HEK293T (cell line): ENCODE measurements at regions of chr7 and their contacts with region 1.

Region 1: GRCh38 chr7:2241580-2242540 is at the starts of genes MRM2 and NUDT1:
- DNase-seq: peak; percentile 91

Region 2: DNA sequence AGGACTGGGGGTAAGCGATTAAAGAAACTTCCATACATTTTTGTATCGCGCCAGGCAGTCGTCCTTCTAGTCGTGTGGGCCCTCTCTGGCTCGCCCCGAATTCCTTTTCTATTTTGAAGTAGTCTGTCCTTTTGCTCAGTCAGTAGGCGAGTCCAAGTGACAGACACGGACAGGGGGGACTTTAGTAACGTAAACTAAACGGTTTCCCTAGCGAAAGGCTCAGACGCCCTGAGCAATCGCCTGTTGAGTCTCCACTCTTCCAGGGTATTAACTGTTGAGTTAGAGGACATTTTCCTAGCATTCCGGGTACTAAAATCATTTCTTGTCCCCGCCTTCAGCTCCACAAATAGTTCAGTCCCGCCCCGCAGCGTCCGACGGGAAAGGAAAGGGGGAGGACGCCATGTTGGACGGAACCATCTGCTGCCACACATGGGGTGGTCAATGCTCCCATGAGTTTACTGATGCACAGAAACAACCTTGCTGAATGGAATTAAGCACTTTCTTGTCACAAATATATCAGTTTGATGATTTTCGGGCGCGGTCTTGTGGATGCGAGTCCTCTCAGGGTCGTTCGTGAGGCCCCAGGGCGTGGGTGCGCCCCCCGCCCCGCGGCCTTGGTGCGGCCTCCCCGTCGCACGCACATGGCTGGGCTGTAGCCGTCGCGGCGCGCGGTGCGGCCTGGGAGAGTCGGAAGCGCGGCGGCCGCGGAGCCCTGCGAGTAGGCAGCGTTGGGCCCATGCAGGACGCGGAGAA is 112.5 kb after region 1 on chr7 and contains the start of gene EIF3B:
- CTCF ChIA-PET with region 1: no interaction called
- POLR2A ChIA-PET with region 1: interaction called, 14 read pairs
- DNase-seq: peak; percentile 89